Activated CD4-positive, alpha-beta T cell treated with anti-CD3 and anti-CD28 coated beads, Interleukin-2, amount 10 ng/mL, durations not matched to agents 24 days and 14 days (primary cell): ENCODE measurements at regions of chr11 and their contacts with region 1.

Region 1: GRCh38 chr11:47269002-47269828 is 718 bp upstream of the MADD start:
- DNase-seq: peak; percentile 94
- H3K4me3 Mint-ChIP-seq: peak overlapping the region; percentile 81
- H3K27ac Mint-ChIP-seq: peak overlapping the region; percentile 97
- H3K4me1 Mint-ChIP-seq: peaks cover 53% of the 10 kb centered on the region
- H3K27me3 Mint-ChIP-seq: no peaks in the 10 kb centered on the region

Region 2: GRCh38 chr11:47213985-47214564 is 55.1 kb before region 1 on chr11:
- intact Hi-C with region 1: loop called (anchors 1 kb)
- DNase-seq: peak; percentile 93
- H3K4me3 Mint-ChIP-seq: peak overlapping the region; percentile 99
- H3K27ac Mint-ChIP-seq: peak overlapping the region; percentile 100
- H3K4me1 Mint-ChIP-seq: peaks cover 37% of the 10 kb centered on the region
- H3K27me3 Mint-ChIP-seq: no peaks in the 10 kb centered on the region

Region 3: GRCh38 chr11:47248664-47249377 is 20.4 kb before region 1 on chr11 and contains the start of gene ACP2:
- intact Hi-C with region 1: loop called (anchors 1 kb)
- DNase-seq: peak; percentile 96
- H3K4me3 Mint-ChIP-seq: peak within 1 kb of the TSS; percentile 98
- H3K27ac Mint-ChIP-seq: peak within 1 kb of the TSS; percentile 98
- H3K4me1 Mint-ChIP-seq: peaks cover 14% of the 10 kb centered on the region
- H3K27me3 Mint-ChIP-seq: no peaks in the 10 kb centered on the region
- total RNA-seq, gene ACP2: 24.8 and 27.6 TPM in 2 replicates

Region 4: DNA sequence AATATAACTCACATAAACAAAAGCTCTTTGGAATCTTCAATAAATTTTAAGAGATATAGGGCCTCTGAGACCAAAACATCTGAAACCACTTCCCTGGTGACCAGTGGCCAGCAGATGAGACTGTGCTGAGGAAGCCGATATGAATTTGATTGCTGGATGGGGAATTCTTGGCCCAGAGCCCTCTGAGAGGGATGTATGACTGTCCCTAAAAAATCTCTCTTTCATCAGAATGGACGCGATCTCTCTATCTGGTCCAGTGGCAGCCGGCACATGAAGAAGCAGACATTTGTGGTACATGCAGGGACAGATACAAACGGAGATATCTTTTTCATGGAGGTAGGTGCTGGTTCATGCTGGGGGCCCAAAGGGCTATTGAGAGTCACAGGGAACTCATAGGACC is 45.8 kb after region 1 on chr11:
- intact Hi-C with region 1: loop called (anchors 5 kb)
- DNase-seq: no peak
- H3K4me3 Mint-ChIP-seq: no peak overlapping the region
- H3K27ac Mint-ChIP-seq: no peak overlapping the region
- H3K4me1 Mint-ChIP-seq: peaks cover 5% of the 10 kb centered on the region
- H3K27me3 Mint-ChIP-seq: no peaks in the 10 kb centered on the region

Region 5: GRCh38 chr11:47407746-47408590 is 138.8 kb after region 1 on chr11 and contains the start of gene SLC39A13:
- intact Hi-C with region 1: loop called (anchors 1 kb)
- DNase-seq: peak; percentile 98
- H3K4me3 Mint-ChIP-seq: peak within 1 kb of the TSS; percentile 97
- H3K27ac Mint-ChIP-seq: peak within 1 kb of the TSS; percentile 97
- H3K4me1 Mint-ChIP-seq: peaks cover 19% of the 10 kb centered on the region
- H3K27me3 Mint-ChIP-seq: no peaks in the 10 kb centered on the region
- total RNA-seq, gene SLC39A13: 13.2 and 13.3 TPM in 2 replicates

Region 6: DNA sequence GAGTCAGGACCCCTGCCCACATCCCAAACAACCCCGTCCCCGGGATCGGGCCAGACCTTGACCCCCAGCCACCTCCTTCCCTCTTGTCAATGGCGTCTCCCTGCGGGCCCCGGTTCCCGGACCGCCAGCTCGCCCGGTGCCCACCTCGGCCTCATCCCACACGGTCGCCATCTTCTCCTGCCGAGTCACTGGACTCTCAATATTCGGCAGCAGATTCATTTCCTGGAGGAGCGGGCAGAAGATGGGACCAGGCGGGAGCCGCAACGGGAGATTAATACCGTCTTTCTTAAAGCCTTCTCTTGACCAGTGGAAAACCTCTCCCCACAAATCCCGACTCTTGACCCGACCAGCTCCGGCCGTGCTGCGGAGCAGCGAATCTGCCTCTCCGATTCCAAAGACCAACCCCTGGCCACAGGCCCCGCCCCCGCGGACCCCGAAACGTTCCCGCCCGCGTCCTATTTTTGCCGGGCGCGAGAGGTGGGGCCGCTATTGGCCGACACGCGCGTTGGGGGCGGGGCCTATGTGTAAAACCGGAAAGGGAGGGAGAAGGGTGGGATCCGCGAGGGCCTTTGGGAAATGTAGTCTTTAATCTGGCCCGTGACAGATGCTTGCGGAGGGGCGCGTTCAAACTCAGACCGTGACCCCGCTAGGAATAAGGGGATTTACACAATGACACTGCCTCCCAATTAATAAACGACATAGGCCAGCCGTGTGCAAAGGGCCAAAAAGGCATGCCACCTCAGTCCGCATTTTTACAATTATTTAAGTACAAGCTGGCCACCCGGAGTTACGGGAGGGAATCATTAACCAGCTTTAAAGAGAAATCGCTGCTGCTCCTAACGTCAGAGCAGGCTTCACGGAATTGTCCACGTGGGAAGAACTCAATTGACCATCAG is 157.1 kb after region 1 on chr11 and contains the start of gene PSMC3:
- intact Hi-C with region 1: loop called (anchors 1 kb)
- DNase-seq: peak; percentile 100
- H3K4me3 Mint-ChIP-seq: peak within 1 kb of the TSS; percentile 100
- H3K27ac Mint-ChIP-seq: peak within 1 kb of the TSS; percentile 99
- H3K4me1 Mint-ChIP-seq: peaks cover 19% of the 10 kb centered on the region
- H3K27me3 Mint-ChIP-seq: no peaks in the 10 kb centered on the region
- total RNA-seq, gene PSMC3: 230 and 234 TPM in 2 replicates

Region 7: DNA sequence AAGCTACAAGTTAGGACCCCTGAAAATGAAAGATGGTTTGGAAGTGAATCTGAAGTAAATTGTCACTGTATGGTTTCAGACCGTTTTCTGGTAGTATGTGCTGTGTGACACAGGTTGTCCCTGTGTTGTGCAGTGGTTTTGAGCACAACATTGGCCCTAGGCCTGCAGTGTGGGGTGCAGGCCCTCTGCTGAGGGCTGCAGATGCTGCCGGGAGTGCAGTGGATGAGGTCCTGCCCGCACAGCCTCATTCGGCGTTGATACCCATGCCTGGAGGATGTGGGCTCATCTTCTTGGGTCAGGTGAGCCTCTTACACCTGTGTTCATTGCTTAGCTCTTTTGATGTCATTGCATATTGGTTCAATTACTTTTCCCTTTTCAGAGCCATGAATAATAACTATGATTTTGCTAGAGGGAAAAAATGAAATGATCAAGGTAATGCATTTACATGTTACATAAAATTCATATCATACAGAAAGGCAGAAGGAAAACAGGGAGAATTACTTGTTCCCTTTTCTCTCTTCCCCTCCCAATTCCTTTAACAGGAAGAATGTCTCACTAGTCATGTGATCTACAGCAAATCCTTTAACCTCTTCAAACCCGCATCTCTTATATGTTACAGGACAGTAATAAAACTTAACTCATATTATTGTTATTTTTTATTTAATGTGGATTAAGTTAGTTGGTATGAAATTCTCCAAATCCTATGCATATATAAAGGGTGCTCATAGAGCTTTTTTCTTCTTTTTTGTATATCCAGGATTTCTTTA is 759.9 kb after region 1 on chr11:
- intact Hi-C with region 1: no loop called
- DNase-seq: peak; percentile 79
- H3K4me3 Mint-ChIP-seq: peak overlapping the region; percentile 42
- H3K27ac Mint-ChIP-seq: peak overlapping the region; percentile 55
- H3K4me1 Mint-ChIP-seq: peaks cover 74% of the 10 kb centered on the region
- H3K27me3 Mint-ChIP-seq: no peaks in the 10 kb centered on the region